A673 (cell line): ENCODE measurements at regions of chr2 and their contacts with region 1.

Region 1: DNA sequence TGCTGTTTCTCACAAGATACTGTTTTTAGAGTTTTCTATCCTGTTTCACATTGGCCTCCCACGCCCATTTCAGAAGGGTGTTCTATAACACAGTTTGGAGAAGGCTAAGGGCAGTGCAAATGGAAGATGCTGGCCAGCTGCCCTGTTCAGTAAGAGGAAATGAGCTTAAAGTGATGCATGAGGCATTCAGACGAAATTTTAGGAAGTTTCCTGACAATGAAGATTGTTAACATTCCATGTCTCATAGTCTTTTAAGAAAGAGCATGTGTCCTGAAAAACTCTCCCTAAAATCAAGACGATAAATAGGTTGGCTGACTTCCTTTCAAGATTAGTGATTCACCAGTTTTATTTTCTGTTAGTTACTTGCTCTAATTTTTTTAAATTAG is 484.2 kb upstream of the NRP2 start:
- DNase-seq: peak; percentile 89
- H3K4me3 ChIP-seq: no peak overlapping the region
- H3K27ac ChIP-seq: no peak overlapping the region
- H3K4me1 ChIP-seq: peaks cover 12% of the 10 kb centered on the region
- H3K27me3 ChIP-seq: no peaks in the 10 kb centered on the region
- CTCF ChIP-seq: no peak

Region 2: DNA sequence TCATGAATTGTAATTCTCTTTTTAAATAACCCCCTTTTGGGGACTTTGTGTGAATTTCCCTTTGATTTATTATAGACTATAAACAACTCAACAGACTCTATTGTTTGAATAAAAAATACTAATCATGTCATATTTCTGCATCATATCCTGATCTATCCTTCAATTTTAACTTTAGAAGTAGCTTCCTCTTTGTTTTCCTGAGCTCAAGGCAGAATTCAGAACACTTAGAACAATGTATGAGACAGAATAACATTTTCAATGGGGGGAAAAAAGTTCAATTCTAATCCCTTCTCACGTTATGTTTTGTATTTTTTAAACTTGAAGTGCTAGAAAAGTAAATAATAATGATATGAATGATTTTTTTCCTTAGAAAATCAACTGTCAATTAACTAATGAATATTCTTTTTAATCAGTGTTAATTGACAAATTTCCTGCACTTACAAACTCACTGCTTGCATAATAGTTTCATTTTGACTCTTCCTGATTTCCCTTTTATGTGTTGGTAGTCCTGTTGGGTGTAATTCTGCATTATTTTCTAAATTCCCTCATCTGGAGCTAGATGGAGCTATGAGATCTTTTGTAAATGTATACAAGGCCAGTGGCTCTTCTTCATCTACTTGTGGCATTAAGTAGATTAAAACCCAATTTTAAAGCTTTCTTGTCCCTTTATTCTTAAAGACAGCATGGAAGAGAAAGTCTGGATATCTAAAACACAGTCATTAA is 326.7 kb before region 1 on chr2:
- CTCF ChIA-PET with region 1: no interaction called
- POLR2A ChIA-PET with region 1: no interaction called
- intact Hi-C with region 1: loop called (anchors 5 kb)
- DNase-seq: peak; percentile 53
- H3K4me3 ChIP-seq: no peak overlapping the region
- H3K27ac ChIP-seq: no peak overlapping the region
- H3K4me1 ChIP-seq: no peaks in the 10 kb centered on the region
- H3K27me3 ChIP-seq: no peaks in the 10 kb centered on the region
- CTCF ChIP-seq: peak; percentile 59